PC-9 (cell line): ENCODE measurements at regions of chr1 and their contacts with region 1.

Region 1: GRCh38 chr1:107750358-107750959 is 214.5 kb downstream of the VAV3 start:
- DNase-seq: peak; percentile 44 to 50
- H3K4me3 ChIP-seq: no peak overlapping the region
- H3K27ac ChIP-seq: no peak overlapping the region
- H3K4me1 ChIP-seq: no peaks in the 10 kb centered on the region
- H3K27me3 ChIP-seq: no peaks in the 10 kb centered on the region
- CTCF ChIP-seq: peak; percentile 96

Region 2: DNA sequence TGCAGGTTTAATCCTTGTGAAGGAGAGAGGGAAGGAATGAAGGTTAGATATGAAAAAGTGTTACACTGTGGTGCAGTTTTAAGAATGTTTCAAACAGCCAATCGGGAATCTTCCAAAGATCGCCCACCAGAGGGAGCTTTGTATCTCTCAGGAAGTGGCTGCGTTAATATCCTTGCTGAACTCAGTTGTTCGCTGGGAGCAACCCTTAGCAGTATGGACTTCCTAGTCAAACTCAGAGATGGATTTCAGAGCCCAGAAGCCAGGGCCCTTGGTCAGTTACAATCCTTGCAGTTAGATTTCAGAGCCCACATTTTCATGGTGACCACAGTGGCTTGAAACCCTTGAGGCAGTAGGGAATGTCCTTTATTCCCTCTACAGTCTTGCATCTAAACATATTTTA is 473.4 kb before region 1 on chr1:
- CTCF ChIA-PET with region 1: interaction called, 3 read pairs
- POLR2A ChIA-PET with region 1: no interaction called
- intact Hi-C with region 1: loop called (anchors 2 kb)
- DNase-seq: peak in 1 of 2 experiments; percentile 4
- H3K4me3 ChIP-seq: no peak overlapping the region
- H3K27ac ChIP-seq: no peak overlapping the region
- H3K4me1 ChIP-seq: no peaks in the 10 kb centered on the region
- H3K27me3 ChIP-seq: no peaks in the 10 kb centered on the region
- CTCF ChIP-seq: peak; percentile 65

Region 3: GRCh38 chr1:107430540-107431228 is 319.8 kb before region 1 on chr1:
- CTCF ChIA-PET with region 1: interaction called, 11 read pairs
- POLR2A ChIA-PET with region 1: interaction called, 4 read pairs
- intact Hi-C with region 1: loop called (anchors 1 kb)
- DNase-seq: peak; percentile 7 to 59
- H3K4me3 ChIP-seq: no peak overlapping the region
- H3K27ac ChIP-seq: no peak overlapping the region
- H3K4me1 ChIP-seq: no peaks in the 10 kb centered on the region
- H3K27me3 ChIP-seq: no peaks in the 10 kb centered on the region
- CTCF ChIP-seq: peak; percentile 93

Region 4: DNA sequence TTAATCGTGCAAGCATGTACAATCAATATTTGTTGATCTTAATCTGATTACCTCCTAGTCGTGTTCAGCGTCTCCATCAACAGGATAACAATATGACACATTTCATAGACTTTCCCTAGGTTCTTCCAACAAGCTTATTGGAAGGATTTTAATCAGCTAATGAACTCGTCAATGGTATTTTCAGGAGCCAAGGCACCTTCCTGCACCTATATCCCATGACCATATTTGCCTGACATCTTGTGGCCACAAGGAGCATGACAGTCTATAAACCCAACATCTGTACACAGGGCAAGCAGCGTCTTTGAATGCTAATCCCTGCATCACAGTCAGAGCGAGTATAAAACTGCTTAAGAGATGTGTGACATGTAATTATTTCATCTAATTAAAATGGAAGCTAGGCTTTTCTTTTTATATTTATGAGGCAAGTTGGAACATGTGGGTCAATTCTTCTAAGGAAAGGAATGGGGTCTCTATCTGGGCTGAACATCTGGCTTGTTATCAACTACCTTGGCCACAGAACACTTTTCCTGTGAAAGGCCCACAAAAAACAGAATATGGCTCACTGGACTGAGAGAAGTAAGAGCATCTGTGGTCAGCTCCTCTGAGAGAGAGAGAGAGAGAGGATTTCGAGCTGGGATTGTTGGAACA is 220.8 kb before region 1 on chr1:
- CTCF ChIA-PET with region 1: interaction called, 3 read pairs
- POLR2A ChIA-PET with region 1: no interaction called
- intact Hi-C with region 1: loop called (anchors 5 kb)
- DNase-seq: peak in 1 of 2 experiments; percentile 56
- H3K4me3 ChIP-seq: no peak overlapping the region
- H3K27ac ChIP-seq: no peak overlapping the region
- H3K4me1 ChIP-seq: peaks cover 5% of the 10 kb centered on the region
- H3K27me3 ChIP-seq: no peaks in the 10 kb centered on the region
- CTCF ChIP-seq: peak; percentile 93

Region 5: GRCh38 chr1:108082738-108083481 is 332.5 kb after region 1 on chr1:
- CTCF ChIA-PET with region 1: no interaction called
- POLR2A ChIA-PET with region 1: no interaction called
- intact Hi-C with region 1: no loop called
- DNase-seq: no peak
- H3K4me3 ChIP-seq: no peak overlapping the region
- H3K27ac ChIP-seq: no peak overlapping the region
- H3K4me1 ChIP-seq: no peaks in the 10 kb centered on the region
- H3K27me3 ChIP-seq: no peaks in the 10 kb centered on the region
- CTCF ChIP-seq: no peak